OCI-LY7 (cell line): ENCODE measurements at regions of chr10 and their contacts with region 1.

Region 1: GRCh38 chr10:71771821-71772617 is 1.3 kb downstream of the VSIR start:
- DNase-seq: no peak
- H3K4me3 ChIP-seq: no peak overlapping the region
- H3K27ac ChIP-seq: no peak overlapping the region
- H3K4me1 ChIP-seq: peaks cover 68% of the 10 kb centered on the region
- CTCF ChIP-seq: no peak

Region 2: DNA sequence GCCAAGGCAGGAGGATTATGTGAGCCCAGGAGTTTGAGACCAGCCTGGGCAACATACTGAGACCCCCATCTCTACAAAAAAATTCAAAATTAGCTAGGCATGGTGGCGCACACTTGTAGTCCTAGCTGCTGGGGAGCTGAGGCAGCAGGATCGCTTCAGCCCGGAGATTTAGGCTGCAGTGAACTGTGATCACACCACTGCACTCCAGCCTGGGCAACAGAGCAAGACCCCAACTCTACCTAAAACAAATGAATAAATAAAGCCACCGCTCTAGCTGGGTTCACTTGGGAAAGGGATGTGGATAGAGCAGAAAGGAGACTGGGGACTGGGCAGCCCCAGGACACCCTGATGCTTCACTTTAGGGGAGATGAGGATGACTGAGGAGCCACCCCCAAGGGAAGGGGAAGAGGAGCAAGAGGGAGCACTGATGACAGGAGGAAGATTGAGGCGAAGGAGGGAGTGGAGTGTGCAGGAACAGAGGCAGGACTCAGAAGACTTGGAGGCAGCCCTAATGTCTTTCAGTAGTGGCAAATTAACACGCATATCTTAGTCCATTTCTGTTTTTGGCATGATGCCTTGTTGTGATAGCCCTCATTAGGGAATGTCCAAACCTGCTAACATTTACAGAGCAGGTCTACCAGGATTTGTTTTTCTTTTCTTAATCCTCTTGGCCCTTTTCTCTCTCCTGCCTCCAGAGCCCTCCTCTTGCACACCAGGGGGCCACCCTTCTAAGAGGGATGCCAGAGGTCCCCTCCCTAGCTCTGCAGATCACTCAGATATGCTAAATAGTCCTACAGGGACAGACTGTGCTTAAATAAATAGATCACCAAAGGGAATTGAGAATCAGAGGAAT is 140.8 kb before region 1 on chr10:
- CTCF ChIA-PET with region 1: no interaction called
- POLR2A ChIA-PET with region 1: no interaction called
- intact Hi-C with region 1: no loop called
- DNase-seq: no peak
- H3K4me3 ChIP-seq: no peak overlapping the region
- H3K27ac ChIP-seq: no peak overlapping the region
- H3K4me1 ChIP-seq: peaks cover 5% of the 10 kb centered on the region
- CTCF ChIP-seq: no peak

Region 3: GRCh38 chr10:71713135-71714030 is 58.6 kb before region 1 on chr10:
- CTCF ChIA-PET with region 1: no interaction called
- POLR2A ChIA-PET with region 1: interaction called, 4 read pairs
- intact Hi-C with region 1: loop called (anchors 5 kb)
- DNase-seq: peak; percentile 49
- H3K4me3 ChIP-seq: no peak overlapping the region
- H3K27ac ChIP-seq: peak overlapping the region; percentile 25
- H3K4me1 ChIP-seq: peaks cover 33% of the 10 kb centered on the region
- CTCF ChIP-seq: no peak

Region 4: GRCh38 chr10:71748671-71749191 is 23.3 kb before region 1 on chr10:
- CTCF ChIA-PET with region 1: interaction called, 5 read pairs
- POLR2A ChIA-PET with region 1: interaction called, 7 read pairs
- intact Hi-C with region 1: loop called (anchors 1 kb)
- DNase-seq: peak; percentile 85
- H3K4me3 ChIP-seq: peak overlapping the region; percentile 25
- H3K27ac ChIP-seq: peak overlapping the region; percentile 88
- H3K4me1 ChIP-seq: peaks cover 75% of the 10 kb centered on the region
- CTCF ChIP-seq: peak; percentile 38; the same call in 1 of the 2 replicates

Region 5: GRCh38 chr10:71812016-71812912 is 40.2 kb after region 1 on chr10:
- CTCF ChIA-PET with region 1: interaction called, 3 read pairs
- POLR2A ChIA-PET with region 1: no interaction called
- intact Hi-C with region 1: loop called (anchors 1 kb)
- DNase-seq: peak; percentile 80
- H3K4me3 ChIP-seq: no peak overlapping the region
- H3K27ac ChIP-seq: no peak overlapping the region
- H3K4me1 ChIP-seq: peaks cover 6% of the 10 kb centered on the region
- CTCF ChIP-seq: peak; percentile 97

Region 6: GRCh38 chr10:71888623-71889387 is 116.8 kb after region 1 on chr10:
- CTCF ChIA-PET with region 1: no interaction called
- POLR2A ChIA-PET with region 1: no interaction called
- intact Hi-C with region 1: loop called (anchors 1 kb)
- DNase-seq: peak; percentile 97
- H3K4me3 ChIP-seq: peak overlapping the region; percentile 57
- H3K27ac ChIP-seq: peak overlapping the region; percentile 50
- H3K4me1 ChIP-seq: peaks cover 38% of the 10 kb centered on the region
- CTCF ChIP-seq: peak; percentile 51

Region 7: GRCh38 chr10:72483471-72483870 is 711.5 kb after region 1 on chr10:
- CTCF ChIA-PET with region 1: no interaction called
- POLR2A ChIA-PET with region 1: no interaction called
- intact Hi-C with region 1: no loop called
- DNase-seq: no peak
- H3K4me3 ChIP-seq: no peak overlapping the region
- H3K27ac ChIP-seq: no peak overlapping the region
- H3K4me1 ChIP-seq: no peaks in the 10 kb centered on the region
- CTCF ChIP-seq: no peak